ENCODE measurements at regions of chr2 and their contacts with region 1.

Region 1: DNA sequence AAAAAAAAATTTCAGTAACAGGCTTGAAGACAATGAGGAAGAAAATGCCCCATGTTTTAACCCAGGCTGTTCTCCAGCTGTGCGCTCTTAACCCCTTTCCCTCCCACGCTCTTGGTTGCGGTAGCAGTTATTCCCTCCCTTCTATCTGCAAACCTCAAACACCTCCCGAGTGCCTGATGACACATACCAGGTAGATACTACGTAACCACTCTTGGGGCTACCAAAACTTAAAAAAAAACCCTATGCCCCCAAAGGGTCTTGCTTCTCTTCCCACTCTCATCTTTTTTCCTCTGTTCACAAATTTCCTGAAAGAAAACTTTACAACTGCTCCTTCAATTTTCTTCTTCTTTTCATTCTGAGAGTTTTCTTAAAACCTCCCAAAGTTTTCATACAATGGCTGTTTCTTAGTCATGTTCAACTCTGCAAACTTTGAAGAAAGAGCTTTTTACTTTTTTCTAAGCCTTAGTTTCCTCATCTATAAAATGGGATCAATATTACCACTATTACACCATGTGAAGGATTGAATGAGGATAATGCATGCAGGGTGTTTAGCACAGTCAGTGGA is 4.9 kb upstream of the DRC1 start:
- DNase-seq: no peak
- CTCF ChIP-seq: no peak

Region 2: DNA sequence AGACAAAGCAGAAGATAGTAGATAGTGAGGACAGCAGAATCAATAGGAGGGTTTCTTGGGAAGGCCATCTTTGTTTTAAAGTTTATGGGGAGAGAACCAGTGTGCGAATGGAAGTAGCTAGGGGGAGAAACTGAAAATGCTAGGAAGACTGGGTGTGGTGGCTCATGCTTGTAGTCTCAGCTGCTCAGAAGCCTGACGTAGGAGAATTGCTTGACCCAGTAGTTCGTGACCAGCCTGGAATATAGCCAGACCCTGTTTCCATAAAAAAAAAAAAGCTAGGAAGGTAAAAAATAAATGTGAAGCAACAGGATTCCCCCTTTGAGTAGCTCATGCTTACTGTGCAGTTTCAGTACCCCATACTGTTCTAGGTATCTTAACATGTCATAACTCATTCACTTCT is 14.3 kb before region 1 on chr2:
- CTCF ChIA-PET with region 1: interaction called, 11 read pairs
- POLR2A ChIA-PET with region 1: no interaction called
- DNase-seq: no peak
- CTCF ChIP-seq: no peak

Region 3: GRCh38 chr2:26438526-26438925 is 41.7 kb after region 1 on chr2:
- CTCF ChIA-PET with region 1: no interaction called
- POLR2A ChIA-PET with region 1: no interaction called
- DNase-seq: no peak
- CTCF ChIP-seq: no peak

Measured in GM10248 (cell line).